Vagina (tissue), 2 donors: ENCODE measurements at regions of chr15 and their contacts with region 1.

Region 1: DNA sequence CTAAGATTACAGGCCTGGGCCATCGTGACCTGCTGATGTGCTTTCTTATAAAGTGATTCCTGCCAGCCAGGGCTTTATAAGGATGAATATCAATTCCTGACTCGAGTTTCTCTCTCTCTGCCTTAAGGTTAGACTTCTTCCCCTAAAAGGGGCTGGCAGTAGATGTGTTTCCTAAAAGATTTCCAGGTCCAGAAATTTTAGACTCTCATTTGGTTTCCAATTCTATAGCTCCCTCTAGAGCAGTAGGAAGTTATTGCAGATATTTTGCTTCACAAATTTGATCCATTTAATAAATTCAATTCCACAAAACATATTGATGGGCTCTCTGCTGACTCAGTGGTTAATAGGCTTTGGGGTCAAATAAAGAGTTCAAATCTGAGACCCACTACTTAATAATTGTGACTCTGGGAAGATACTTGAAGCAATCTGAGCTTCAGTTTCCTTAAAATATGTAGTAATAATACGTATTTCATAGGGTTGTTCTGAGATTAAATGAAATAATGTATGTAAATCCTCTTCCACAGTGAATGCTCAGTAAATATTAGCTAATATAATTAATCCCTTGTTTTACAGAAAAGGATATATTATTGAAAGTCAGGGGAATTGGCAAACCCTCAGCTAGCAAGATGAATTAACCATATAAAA is 2.1 kb downstream of the TRIM69 start:
- DNase-seq: no peak
- H3K4me3 ChIP-seq: no peak overlapping the region
- H3K27ac ChIP-seq: no peak overlapping the region
- H3K4me1 ChIP-seq: no peaks in the 10 kb centered on the region
- H3K27me3 ChIP-seq: no peaks in the 10 kb centered on the region
- CTCF ChIP-seq: peak in 2 of 3 experiments; percentile 68 to 77
- POLR2A ChIP-seq: no peak

Region 2: DNA sequence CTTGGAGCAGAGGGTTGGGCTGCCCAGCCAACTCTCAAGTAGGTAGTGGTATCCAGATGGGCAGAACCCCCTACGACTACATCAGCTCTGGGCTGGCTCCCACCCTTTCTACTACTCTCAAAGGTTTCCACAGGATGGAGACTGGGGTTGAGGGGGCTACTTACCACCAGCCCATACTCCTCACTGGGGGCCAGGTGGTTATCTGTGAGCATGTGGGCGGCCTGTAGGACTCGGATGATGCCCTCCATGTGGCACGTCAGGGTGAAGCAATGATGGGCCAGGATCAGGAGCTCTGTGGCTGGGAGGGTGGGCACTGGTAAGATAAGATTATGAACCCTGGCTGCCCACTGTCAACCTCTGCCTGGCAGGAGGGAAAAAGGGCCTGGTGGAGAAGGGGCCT is 168.1 kb before region 1 on chr15:
- intact Hi-C with region 1: loop called (anchors 10 kb)
- DNase-seq: no peak
- H3K4me3 ChIP-seq: no peak overlapping the region
- H3K27ac ChIP-seq: no peak overlapping the region
- H3K4me1 ChIP-seq: no peaks in the 10 kb centered on the region
- H3K27me3 ChIP-seq: no peaks in the 10 kb centered on the region
- CTCF ChIP-seq: no peak
- POLR2A ChIP-seq: no peak